ENCODE measurements at regions of chr1 and their contacts with region 1.

Region 1: DNA sequence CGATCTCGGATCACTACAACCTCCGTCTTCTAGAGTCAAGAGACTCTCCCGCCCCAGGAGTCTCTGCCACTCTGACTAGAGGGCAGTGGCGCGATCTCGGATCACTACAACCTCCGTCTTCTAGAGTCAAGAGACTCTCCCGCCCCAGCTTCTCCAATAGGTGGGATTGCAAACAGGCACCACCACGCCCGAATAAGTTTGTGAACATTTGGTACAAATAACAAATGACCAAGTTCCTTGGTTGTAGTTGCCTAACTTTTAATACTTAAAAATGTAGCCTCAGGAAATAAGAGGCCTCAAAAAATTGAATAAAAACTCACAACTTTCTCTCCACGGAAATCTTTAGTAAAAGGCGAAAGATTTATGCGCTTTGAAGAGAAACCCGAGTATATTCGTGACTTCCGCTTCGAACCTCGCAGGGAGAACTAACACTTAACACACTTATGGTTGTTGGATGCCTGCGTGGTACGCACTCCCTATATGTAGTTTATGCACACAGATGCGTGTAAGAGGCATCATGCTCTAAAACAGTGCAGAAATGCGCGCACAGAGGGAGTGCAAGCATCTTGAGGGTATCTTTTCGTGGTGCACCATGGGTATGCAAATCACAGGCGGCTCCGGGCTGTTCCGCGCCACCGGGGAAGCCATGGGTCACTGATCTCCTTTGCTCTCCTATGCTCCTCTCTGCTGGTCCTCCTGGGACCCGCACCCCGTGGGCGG is 11.4 kb downstream of the BTBD19 start:
- DNase-seq: peak; percentile 92
- ATAC-seq: peak; percentile 92
- H3K4me3 Mint-ChIP-seq: peak overlapping the region; percentile 92
- H3K27ac Mint-ChIP-seq: peak overlapping the region; percentile 100
- H3K4me1 Mint-ChIP-seq: peaks cover 51% of the 10 kb centered on the region
- H3K27me3 Mint-ChIP-seq: no peaks in the 10 kb centered on the region

Region 2: GRCh38 chr1:44619261-44619900 is 200.4 kb before region 1 on chr1:
- CTCF ChIA-PET with region 1: no interaction called
- POLR2A ChIA-PET with region 1: no interaction called
- DNase-seq: no peak
- ATAC-seq: no peak
- H3K4me3 Mint-ChIP-seq: no peak overlapping the region
- H3K27ac Mint-ChIP-seq: no peak overlapping the region
- H3K4me1 Mint-ChIP-seq: no peaks in the 10 kb centered on the region
- H3K27me3 Mint-ChIP-seq: peaks cover 2% of the 10 kb centered on the region

Region 3: DNA sequence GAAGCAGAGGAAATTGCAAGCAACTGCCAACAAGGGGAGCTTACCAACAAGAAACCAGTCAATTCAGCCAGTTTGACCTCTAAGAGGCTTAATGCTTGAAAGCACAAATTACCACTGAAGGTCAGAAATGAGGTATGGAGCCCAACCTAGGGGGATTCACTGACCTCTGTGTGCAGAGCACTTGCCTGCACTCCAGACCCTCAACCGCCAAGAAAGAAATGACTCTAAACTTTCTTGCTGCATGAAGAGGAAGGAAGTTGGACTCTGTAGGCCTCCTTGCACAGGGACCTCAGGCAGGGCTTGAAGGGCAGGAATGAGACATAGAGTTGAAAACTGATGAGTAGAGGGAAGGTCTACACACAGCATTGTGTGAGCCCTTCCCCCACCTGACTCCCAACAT is 135.2 kb before region 1 on chr1:
- CTCF ChIA-PET with region 1: no interaction called
- POLR2A ChIA-PET with region 1: no interaction called
- DNase-seq: no peak
- ATAC-seq: peak; percentile 39
- H3K4me3 Mint-ChIP-seq: no peak overlapping the region
- H3K27ac Mint-ChIP-seq: no peak overlapping the region
- H3K4me1 Mint-ChIP-seq: peaks cover 8% of the 10 kb centered on the region
- H3K27me3 Mint-ChIP-seq: peaks cover 2% of the 10 kb centered on the region

Region 4: GRCh38 chr1:44775078-44775929 is 44.5 kb before region 1 on chr1 and contains the start of gene RPS8:
- CTCF ChIA-PET with region 1: no interaction called
- POLR2A ChIA-PET with region 1: interaction called, 47 read pairs
- DNase-seq: peak; percentile 95
- ATAC-seq: peak; percentile 80
- H3K4me3 Mint-ChIP-seq: peak within 1 kb of the TSS; percentile 86
- H3K27ac Mint-ChIP-seq: peak within 1 kb of the TSS; percentile 97
- H3K4me1 Mint-ChIP-seq: peaks cover 33% of the 10 kb centered on the region
- H3K27me3 Mint-ChIP-seq: no peaks in the 10 kb centered on the region
- total RNA-seq, gene RPS8: 1,750 to 1,777 TPM

Region 5: GRCh38 chr1:44792783-44793714 is 26.7 kb before region 1 on chr1:
- CTCF ChIA-PET with region 1: interaction called, 5 read pairs
- POLR2A ChIA-PET with region 1: interaction called, 713 read pairs
- DNase-seq: no peak
- ATAC-seq: no peak
- H3K4me3 Mint-ChIP-seq: no peak overlapping the region
- H3K27ac Mint-ChIP-seq: no peak overlapping the region
- H3K4me1 Mint-ChIP-seq: peaks cover 3% of the 10 kb centered on the region
- H3K27me3 Mint-ChIP-seq: no peaks in the 10 kb centered on the region

Region 6: DNA sequence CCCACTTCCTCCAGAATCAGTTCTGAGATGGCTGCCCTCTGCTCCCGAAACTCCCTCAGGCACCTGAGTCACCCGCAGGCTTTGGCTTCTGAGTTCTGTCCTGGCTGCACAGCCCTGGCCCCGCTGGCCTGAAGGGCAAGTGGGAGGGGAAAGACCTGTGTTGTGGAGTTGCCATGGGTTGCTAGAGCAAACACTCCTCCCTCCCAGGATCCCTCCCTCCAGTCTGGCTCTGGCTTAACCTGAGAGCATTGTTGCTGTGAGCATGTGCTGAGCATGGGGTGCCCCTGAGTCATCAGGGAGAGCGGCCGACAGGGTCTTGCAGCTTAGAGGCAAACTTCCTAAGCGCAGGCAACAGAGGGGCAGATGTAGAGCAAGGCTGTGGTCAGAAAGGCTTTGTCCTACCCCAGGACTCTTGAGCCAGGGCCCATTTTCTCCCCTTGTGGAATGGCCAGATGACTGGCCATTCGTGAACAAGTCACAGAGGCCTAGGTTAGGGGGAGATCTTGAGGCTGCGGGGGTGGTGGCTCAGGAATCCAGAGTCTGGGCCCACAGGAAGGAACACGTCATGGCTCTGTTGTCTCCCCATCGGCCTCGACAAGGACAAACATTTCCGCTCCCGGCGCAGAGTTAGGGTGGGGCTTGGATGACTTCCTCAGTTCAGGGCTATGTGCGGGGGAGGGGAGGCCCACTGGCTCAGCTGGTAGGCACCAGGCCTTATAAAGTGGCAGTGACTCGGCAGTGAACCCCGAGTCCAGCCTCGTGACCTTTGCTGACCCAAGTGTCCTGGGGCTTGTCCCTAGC is 12.3 kb before region 1 on chr1 and contains the start of gene DYNLT4:
- CTCF ChIA-PET with region 1: interaction called, 34 read pairs
- POLR2A ChIA-PET with region 1: interaction called, 713 read pairs
- DNase-seq: peak; percentile 94
- ATAC-seq: peak; percentile 52
- H3K4me3 Mint-ChIP-seq: peak within 1 kb of the TSS; percentile 65
- H3K27ac Mint-ChIP-seq: peak within 1 kb of the TSS; percentile 100
- H3K4me1 Mint-ChIP-seq: peaks cover 86% of the 10 kb centered on the region
- H3K27me3 Mint-ChIP-seq: no peaks in the 10 kb centered on the region
- total RNA-seq, gene DYNLT4: 1.8 to 2.3 TPM

Region 7: DNA sequence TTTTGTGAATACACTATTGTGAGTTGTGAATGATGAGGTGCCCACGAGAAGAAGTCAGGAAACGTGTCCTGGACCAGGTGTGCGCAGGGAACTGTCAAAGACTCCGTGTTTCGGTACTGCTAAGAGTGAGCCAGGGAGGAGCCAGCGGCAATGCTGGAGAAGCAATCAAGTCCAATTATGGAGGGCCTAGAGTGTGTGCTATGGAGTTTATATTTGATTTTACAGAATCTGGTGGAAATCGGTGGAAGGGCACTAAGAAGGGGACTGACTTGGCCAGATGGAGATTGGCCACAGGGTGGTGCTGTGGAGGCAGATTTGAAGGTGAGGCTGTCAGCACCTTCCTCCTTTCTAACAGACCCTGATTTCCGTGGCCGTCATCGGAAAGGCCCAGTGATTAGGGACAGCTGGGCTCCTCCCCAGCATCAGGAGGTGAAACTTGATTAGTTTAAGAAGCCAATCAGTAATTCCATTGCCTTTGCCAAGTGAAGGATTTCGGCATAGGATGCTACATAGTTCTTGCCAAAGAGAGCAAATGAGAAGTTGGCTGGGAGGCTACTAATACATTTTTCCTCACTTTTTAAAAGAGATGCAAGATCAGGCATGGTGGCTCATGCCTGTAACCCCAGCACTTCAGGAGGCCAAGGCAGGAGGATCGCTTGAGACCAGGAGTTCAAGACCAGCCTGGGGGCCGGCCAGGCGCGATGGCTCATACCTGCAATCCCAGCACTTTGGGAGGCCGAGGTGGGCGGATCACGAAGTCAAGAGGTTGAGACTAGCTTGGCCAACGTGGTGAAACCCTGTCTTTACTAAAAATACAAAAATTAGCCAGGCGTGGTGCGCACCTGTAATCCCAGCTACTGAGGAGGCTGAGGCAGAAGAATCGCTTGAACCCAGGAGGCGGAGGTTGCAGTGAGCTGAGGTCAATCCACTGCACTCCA is 16.2 kb after region 1 on chr1:
- CTCF ChIA-PET with region 1: interaction called, 5 read pairs
- POLR2A ChIA-PET with region 1: interaction called, 31 read pairs
- DNase-seq: peak; percentile 93
- ATAC-seq: peak; percentile 95
- H3K4me3 Mint-ChIP-seq: no peak overlapping the region
- H3K27ac Mint-ChIP-seq: peak overlapping the region; percentile 7
- H3K4me1 Mint-ChIP-seq: peaks cover 8% of the 10 kb centered on the region
- H3K27me3 Mint-ChIP-seq: peaks cover under 1% of the 10 kb centered on the region